Heart right ventricle (tissue), 16 donors: ENCODE measurements at regions of chr20 and their contacts with region 1.

Region 1: GRCh38 chr20:55406872-55407271 is 598.4 kb downstream of the CBLN4 start:
- DNase-seq: no peak
- ATAC-seq: no peak
- H3K4me3 ChIP-seq: no peak overlapping the region
- H3K27ac ChIP-seq: no peak overlapping the region
- H3K4me1 ChIP-seq: no peaks in the 10 kb centered on the region
- H3K27me3 ChIP-seq: no peaks in the 10 kb centered on the region
- CTCF ChIP-seq: no peak

Region 2: DNA sequence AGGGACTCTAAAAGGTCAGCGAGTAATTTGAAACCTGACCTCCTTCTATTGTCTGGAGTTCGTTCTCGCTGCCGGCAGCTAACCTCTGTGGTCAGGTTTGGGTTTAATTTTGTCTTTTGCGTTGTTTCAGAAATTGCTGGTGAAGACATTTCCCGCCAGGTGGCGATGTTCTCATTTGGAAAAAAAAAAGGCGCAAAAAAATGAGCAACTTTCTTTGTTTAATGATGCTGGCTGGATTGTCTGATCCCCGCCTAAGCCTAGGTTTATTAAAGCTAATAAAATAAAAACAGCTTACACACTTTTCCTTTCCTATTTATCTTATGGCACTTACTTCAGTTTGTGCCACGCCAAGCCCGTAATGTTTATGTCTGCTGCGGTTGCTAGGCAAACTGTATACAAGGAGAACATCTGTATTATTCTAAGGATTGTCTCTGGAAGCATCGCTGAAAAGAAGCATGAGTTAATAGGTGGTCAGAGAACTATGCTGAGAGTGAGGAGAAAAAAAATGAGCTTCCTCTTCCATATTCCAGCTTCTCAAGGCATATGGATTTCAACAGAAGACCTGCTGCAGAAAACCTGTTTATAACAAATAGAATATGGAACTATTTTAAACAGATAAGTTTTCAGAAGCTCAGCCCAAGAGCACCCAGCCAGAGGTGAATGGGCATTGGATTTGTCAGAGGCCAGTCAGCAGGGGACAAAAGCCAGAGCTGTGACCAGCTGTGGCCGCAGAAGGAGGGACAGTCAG is 725.8 kb before region 1 on chr20:
- intact Hi-C with region 1: loop called in 2 of 10 experiments (anchors 10 kb)
- DNase-seq: no peak
- ATAC-seq: no peak
- H3K4me3 ChIP-seq: no peak overlapping the region
- H3K27ac ChIP-seq: no peak overlapping the region
- H3K4me1 ChIP-seq: peaks cover 0 to 7% (median 0%) of the 10 kb centered on the region in 9 donors
- H3K27me3 ChIP-seq: peaks cover 5 to 47% (median 35%) of the 10 kb centered on the region in 7 donors
- CTCF ChIP-seq: peak; percentile 41 to 75 (median 60)

Region 3: GRCh38 chr20:55333798-55334197 is 73.1 kb before region 1 on chr20:
- intact Hi-C with region 1: no loop called
- DNase-seq: no peak
- ATAC-seq: no peak
- H3K4me3 ChIP-seq: no peak overlapping the region
- H3K27ac ChIP-seq: no peak overlapping the region
- H3K4me1 ChIP-seq: no peaks in the 10 kb centered on the region
- H3K27me3 ChIP-seq: no peaks in the 10 kb centered on the region
- CTCF ChIP-seq: no peak